AG04449 (cell line): ENCODE measurements at regions of chr7 and their contacts with region 1.

Region 1: DNA sequence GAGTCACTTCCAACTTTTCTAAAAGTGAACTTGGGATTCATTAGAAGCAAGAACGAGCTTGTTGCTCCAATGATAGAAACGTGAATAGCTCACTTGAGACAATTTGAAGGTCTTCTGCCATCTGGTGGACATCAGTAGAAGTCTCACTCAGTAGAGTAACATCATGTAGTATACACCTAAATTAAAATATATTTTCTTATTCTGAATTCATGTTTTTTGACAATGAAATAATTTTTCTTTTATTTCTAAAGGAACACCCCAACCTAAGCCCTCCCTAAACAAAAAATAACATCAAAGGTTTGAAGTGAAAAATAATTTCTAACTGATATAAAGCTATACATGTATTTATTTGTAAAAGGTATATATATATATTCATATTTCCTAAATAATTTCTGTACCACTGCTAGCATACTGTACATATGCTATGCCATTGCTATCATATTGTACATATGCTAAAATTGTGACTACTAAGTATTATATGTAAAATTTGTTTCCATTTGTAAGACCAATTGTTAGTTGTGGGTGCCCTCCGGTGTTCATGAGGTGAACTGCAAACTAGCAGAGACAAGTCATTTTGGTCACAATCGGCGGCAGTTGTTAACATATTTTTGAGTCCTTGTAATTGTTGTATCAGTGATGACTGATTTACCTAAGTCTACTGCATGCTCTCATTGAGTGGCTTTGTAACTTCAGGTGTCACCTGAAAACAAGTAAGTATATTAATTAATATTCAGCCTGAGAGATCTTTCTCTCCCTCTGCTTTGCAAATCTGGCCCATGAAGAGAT is 121.9 kb downstream of the PTPRZ1 start:
- DNase-seq: peak; percentile 47
- H3K4me3 ChIP-seq: no peak overlapping the region
- CTCF ChIP-seq: peak; percentile 79

Region 2: DNA sequence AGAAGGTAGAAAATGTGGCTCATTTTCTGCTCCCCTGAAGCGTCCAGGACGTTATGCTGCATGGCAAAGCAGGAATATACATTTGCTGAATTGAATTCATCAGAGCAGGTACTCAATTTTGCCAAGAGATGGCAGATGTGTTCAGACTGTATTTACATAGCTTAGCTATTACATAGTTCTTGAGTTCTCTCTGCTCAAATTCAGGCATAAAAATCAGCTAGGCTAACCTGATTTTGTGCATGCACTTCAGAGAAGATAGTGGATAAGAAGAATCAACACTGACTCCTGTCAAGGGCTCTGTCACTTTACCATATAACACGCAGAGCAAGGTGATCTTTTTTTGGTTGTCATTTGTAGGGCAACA is 389.5 kb before region 1 on chr7:
- CTCF ChIA-PET with region 1: interaction called, 49 read pairs
- POLR2A ChIA-PET with region 1: no interaction called
- DNase-seq: no peak
- H3K4me3 ChIP-seq: no peak overlapping the region
- CTCF ChIP-seq: no peak

Region 3: GRCh38 chr7:121741896-121742295 is 252.9 kb before region 1 on chr7:
- CTCF ChIA-PET with region 1: interaction called, 13 read pairs
- POLR2A ChIA-PET with region 1: no interaction called
- DNase-seq: no peak
- H3K4me3 ChIP-seq: no peak overlapping the region
- CTCF ChIP-seq: no peak

Region 4: DNA sequence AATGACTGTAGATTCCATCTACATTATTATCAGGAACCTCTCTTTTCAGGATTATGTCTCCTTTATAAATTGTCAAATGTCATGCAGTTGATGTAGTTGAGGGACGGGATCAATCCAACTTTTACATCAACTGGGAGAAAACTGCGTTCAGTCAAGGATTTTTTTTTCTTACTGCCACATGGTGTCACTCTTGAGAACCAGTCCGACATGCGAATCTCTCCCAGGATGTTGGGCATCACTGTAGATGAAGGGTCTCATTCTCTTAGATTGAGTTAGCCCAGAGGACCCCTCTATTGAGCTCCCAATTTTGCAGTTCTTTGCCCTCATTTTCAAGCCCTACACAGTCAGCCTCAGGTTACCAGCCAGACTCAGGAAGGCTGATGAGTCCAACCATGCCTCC is 242.1 kb before region 1 on chr7:
- CTCF ChIA-PET with region 1: interaction called, 134 read pairs
- POLR2A ChIA-PET with region 1: no interaction called
- DNase-seq: no peak
- H3K4me3 ChIP-seq: no peak overlapping the region
- CTCF ChIP-seq: peak; percentile 34

Region 5: DNA sequence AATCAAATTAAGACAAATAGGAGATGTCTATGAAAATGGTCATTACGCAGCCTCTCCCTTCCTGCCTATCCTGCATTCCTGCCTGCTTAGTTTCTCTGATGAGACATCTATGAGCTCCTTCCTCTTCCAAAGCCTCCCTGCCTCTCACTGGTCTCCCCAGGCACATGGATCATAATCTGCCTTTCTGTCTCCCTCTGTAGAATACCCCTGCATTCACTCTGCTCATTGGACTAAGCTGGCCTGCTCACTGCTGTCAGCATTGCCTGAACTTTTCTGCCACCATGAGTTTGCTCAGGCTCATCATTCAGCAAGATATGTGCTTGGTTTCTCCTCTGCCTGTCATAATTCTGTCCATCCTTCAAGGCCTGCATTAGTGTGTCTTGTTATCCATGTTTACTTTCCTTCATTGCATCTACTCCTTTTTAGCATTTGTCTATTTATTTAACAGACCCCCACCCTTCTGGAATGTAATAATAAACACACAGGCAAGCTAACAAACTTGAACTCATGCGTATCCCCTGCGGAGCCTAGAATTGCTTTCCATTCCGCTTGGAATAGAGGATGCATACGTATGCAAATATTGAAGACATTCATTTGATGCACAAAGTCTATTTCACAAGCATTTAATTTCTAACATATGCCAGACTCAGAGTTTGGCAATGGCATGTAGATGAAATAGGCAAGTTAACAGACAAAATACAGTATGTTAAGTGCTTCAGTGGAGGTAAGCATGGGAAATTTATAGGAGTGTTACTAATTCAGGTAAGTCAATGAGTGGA is 33.5 kb before region 1 on chr7:
- CTCF ChIA-PET with region 1: interaction called, 11 read pairs
- POLR2A ChIA-PET with region 1: no interaction called
- DNase-seq: peak; percentile 54
- H3K4me3 ChIP-seq: peak overlapping the region; percentile 9; the same call in 1 of the 2 replicates
- CTCF ChIP-seq: peak; percentile 9

Region 6: DNA sequence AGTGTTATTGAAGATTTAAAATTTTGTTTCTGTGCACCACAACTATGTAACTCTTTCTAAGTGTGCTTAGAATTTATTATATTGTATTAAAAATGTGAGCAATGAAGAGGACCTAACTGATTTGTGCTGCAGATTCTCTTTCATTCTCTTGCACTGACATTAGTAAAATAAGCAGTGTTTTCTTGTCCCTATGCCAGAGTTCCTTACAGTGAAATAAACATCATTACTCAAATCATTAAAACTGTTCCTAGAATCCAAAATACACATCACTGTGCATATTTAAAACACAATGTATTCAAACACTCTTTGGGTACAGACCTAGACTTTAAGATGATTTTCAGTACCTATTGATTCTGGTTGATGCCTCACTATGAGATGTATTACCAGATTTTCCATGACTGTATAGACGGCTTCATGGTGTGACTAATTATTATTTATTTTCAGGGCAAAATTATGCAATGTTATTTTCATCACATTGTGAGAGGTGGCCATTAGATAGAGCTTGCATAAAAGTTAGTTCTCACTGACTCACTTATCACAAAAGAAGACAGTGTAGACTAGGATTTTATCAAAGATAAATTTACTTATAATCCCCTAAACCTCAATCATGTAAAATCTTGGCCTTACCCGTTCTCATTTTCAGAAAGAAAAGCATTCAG is 28.4 kb before region 1 on chr7:
- CTCF ChIA-PET with region 1: interaction called, 21 read pairs
- POLR2A ChIA-PET with region 1: no interaction called
- DNase-seq: no peak
- H3K4me3 ChIP-seq: no peak overlapping the region
- CTCF ChIP-seq: no peak

Region 7: GRCh38 chr7:122006687-122007086 is 11.9 kb after region 1 on chr7:
- CTCF ChIA-PET with region 1: interaction called, 10 read pairs
- POLR2A ChIA-PET with region 1: no interaction called
- DNase-seq: no peak
- H3K4me3 ChIP-seq: no peak overlapping the region
- CTCF ChIP-seq: no peak

Region 8: GRCh38 chr7:122067077-122067476 is 72.3 kb after region 1 on chr7:
- CTCF ChIA-PET with region 1: no interaction called
- POLR2A ChIA-PET with region 1: no interaction called
- DNase-seq: no peak
- H3K4me3 ChIP-seq: no peak overlapping the region
- CTCF ChIP-seq: no peak